AG04449 (cell line): ENCODE measurements at regions of chr1 and their contacts with region 1.

Region 1: GRCh38 chr1:95043141-95043980 is 29.4 kb downstream of the ALG14 start:
- DNase-seq: no peak
- H3K4me3 ChIP-seq: no peak overlapping the region
- CTCF ChIP-seq: peak; percentile 95

Region 2: GRCh38 chr1:94819238-94819940 is 224.0 kb before region 1 on chr1:
- CTCF ChIA-PET with region 1: interaction called, 16 read pairs
- POLR2A ChIA-PET with region 1: no interaction called
- DNase-seq: no peak
- H3K4me3 ChIP-seq: peak overlapping the region; percentile 61
- CTCF ChIP-seq: no peak

Region 3: DNA sequence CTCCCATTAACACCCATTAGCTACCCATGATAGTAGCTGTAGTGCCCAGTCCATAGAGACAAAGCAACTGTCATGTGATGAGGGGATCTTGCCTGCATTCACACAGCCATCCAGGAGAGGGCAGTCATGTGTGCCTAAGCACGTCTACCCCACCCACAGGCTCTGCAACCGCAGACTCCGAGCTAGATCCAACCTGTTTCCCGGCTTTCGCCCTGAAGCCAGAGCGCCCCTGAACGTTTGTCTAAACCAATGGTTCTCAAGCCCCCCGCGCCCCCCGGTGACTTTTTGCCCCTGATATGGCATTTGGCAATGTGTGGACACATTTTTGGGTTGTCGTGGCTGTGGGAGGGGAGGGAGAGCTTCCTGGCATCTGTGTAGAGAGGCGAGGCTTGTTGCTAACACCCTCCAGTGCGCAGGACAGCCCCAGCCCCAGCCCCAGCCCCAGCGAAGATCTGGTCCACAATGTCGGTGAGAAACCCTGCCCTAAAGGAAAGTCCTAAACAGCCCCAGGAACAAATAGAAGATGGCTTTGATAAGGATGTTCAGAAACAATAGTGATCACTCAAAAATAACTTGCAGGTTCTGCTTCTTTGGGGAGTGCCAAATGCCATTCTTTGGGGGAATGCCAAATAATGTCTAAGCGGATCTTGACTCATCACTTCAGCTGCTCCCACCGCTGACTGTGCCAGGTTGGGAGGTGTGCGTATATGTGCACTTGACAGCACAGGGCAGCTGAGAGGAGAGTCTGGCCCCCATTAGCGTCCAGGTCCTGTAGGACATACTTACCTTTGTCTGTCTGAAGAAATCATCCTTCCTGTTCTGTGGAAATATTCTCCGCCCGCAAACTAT is 188.7 kb before region 1 on chr1:
- CTCF ChIA-PET with region 1: interaction called, 384 read pairs
- POLR2A ChIA-PET with region 1: interaction called, 16 read pairs
- DNase-seq: peak; percentile 55
- H3K4me3 ChIP-seq: peak overlapping the region; percentile 56
- CTCF ChIP-seq: peak; percentile 94

Region 4: DNA sequence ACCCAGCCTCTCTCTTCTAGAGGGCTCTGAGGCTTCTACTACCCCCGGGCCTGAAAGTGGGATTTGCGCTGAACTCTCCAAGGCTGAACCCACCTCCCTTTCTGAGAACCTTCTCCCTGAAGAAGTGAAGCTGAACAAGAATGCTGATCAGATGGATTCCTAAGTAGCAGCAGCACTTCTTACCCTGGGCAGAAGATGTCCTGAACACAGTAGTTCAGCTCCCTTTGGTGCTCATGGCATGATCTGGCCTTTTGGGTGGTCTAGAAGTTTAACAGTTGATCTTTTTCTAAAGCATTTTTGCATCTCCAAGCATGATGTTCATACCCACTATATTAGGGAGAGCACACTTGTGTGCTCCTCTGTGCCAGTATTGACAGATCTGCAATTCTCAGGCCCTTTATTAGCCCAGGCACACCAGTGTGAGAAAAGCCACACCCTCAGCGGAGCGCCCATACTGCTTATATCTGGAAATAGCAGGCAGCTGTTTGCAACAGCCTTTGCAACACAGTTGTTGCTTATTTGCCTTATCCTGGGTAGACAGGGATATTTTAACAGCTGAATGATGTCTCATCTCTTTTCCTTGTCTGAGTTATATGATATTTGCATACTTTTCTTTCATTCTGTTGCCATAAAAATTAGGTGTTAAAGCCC is 150.6 kb before region 1 on chr1:
- CTCF ChIA-PET with region 1: interaction called, 19 read pairs
- POLR2A ChIA-PET with region 1: no interaction called
- DNase-seq: no peak
- H3K4me3 ChIP-seq: no peak overlapping the region
- CTCF ChIP-seq: no peak

Region 5: GRCh38 chr1:94926915-94927404 is 116.4 kb before region 1 on chr1 and contains the start of gene CNN3:
- CTCF ChIA-PET with region 1: interaction called, 65 read pairs
- POLR2A ChIA-PET with region 1: interaction called, 3 read pairs
- DNase-seq: peak; percentile 49
- H3K4me3 ChIP-seq: peak within 1 kb of the TSS; percentile 89
- CTCF ChIP-seq: peak; percentile 2

Region 6: GRCh38 chr1:95058974-95059373 is 15.6 kb after region 1 on chr1:
- CTCF ChIA-PET with region 1: interaction called, 19 read pairs
- POLR2A ChIA-PET with region 1: no interaction called
- DNase-seq: no peak
- H3K4me3 ChIP-seq: no peak overlapping the region
- CTCF ChIP-seq: no peak

Region 7: GRCh38 chr1:95116580-95117206 is 73.3 kb after region 1 on chr1:
- CTCF ChIA-PET with region 1: no interaction called
- POLR2A ChIA-PET with region 1: no interaction called
- DNase-seq: no peak
- H3K4me3 ChIP-seq: peak overlapping the region; percentile 54
- CTCF ChIP-seq: peak; percentile 43

Region 8: DNA sequence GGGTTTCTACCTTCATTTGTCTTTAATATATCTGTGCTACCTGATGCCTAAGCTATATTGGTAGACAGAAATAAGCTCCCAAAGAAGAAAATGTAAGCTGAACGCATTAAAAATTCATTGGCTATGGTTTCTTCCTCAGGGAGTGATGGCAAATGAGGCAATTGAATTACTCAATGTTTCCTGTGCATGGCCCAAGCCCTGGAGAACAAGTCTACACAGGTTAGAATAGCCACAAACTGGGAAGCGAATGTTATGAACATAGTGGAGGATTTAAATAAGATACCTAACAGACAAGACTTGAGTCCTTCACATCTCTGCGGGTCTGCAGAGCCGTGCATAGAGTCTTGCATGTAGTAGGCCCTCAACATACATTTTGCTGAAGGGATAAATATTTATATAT is 541.0 kb after region 1 on chr1:
- CTCF ChIA-PET with region 1: no interaction called
- POLR2A ChIA-PET with region 1: no interaction called
- DNase-seq: no peak
- H3K4me3 ChIP-seq: no peak overlapping the region
- CTCF ChIP-seq: no peak